ENCODE measurements at regions of chr10 and their contacts with region 1.

Region 1: GRCh38 chr10:74008212-74008731 is 10.4 kb downstream of the VCL start:
- DNase-seq: peak; percentile 98
- ATAC-seq: peak; percentile 80
- H3K4me3 ChIP-seq: peak overlapping the region; percentile 1; the same call in 1 of the 2 replicates
- H3K27ac ChIP-seq: peak overlapping the region; percentile 54
- H3K4me1 ChIP-seq: peaks cover 68% of the 10 kb centered on the region
- H3K27me3 ChIP-seq: no peaks in the 10 kb centered on the region
- CTCF ChIP-seq: 0 out of 2 replicates have a peak, but pooled peaks have one; percentile 17

Region 2: GRCh38 chr10:73730153-73730906 is 277.9 kb before region 1 on chr10:
- CTCF ChIA-PET with region 1: no interaction called
- POLR2A ChIA-PET with region 1: interaction called, 24 read pairs
- intact Hi-C with region 1: no loop called
- DNase-seq: peak; percentile 100
- ATAC-seq: peak; percentile 87
- H3K4me3 ChIP-seq: peak overlapping the region; percentile 69
- H3K27ac ChIP-seq: peak overlapping the region; percentile 72
- H3K4me1 ChIP-seq: peaks cover 9% of the 10 kb centered on the region
- H3K27me3 ChIP-seq: no peaks in the 10 kb centered on the region
- CTCF ChIP-seq: no peak

Region 3: GRCh38 chr10:73965890-73966768 is 42.1 kb before region 1 on chr10:
- CTCF ChIA-PET with region 1: no interaction called
- POLR2A ChIA-PET with region 1: interaction called, 3 read pairs
- intact Hi-C with region 1: loop called (anchors 1 kb)
- DNase-seq: peak; percentile 100
- ATAC-seq: peak; percentile 98
- H3K4me3 ChIP-seq: peak overlapping the region; percentile 6
- H3K27ac ChIP-seq: peak overlapping the region; percentile 73
- H3K4me1 ChIP-seq: peaks cover 27% of the 10 kb centered on the region
- H3K27me3 ChIP-seq: no peaks in the 10 kb centered on the region
- CTCF ChIP-seq: no peak

Region 4: GRCh38 chr10:74021248-74022055 is 13.2 kb after region 1 on chr10:
- CTCF ChIA-PET with region 1: interaction called, 6 read pairs
- POLR2A ChIA-PET with region 1: interaction called, 10 read pairs
- intact Hi-C with region 1: loop called (anchors 1 kb)
- DNase-seq: peak; percentile 89
- ATAC-seq: peak; percentile 53
- H3K4me3 ChIP-seq: no peak overlapping the region
- H3K27ac ChIP-seq: peak overlapping the region; percentile 14
- H3K4me1 ChIP-seq: peaks cover 37% of the 10 kb centered on the region
- H3K27me3 ChIP-seq: no peaks in the 10 kb centered on the region
- CTCF ChIP-seq: no peak

Region 5: DNA sequence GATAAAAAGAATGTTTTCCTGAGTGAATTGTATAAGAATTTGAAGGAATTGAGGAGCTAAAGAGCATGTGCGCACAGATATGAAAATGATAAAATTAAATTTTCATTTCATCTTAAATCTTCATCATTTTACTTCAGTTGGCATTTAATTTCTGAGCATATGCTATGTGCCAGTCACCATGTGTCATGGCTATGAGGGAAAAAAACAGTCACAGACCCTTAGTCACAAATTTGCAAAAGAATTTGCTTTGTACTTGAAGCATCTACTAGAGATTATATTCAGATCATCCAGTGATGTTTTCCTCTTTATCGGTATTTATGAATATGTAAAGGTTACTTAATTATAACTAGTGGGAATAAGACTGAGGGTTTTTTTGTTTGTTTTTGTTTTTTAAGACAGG is 19.4 kb after region 1 on chr10:
- CTCF ChIA-PET with region 1: interaction called, 6 read pairs
- POLR2A ChIA-PET with region 1: interaction called, 10 read pairs
- intact Hi-C with region 1: no loop called
- DNase-seq: peak; percentile 89
- ATAC-seq: no peak
- H3K4me3 ChIP-seq: no peak overlapping the region
- H3K27ac ChIP-seq: peak overlapping the region; percentile 2
- H3K4me1 ChIP-seq: peaks cover 33% of the 10 kb centered on the region
- H3K27me3 ChIP-seq: no peaks in the 10 kb centered on the region
- CTCF ChIP-seq: no peak

Region 6: GRCh38 chr10:74035303-74035702 is 27.0 kb after region 1 on chr10:
- CTCF ChIA-PET with region 1: interaction called, 13 read pairs
- POLR2A ChIA-PET with region 1: no interaction called
- intact Hi-C with region 1: loop called (anchors 1 kb)
- DNase-seq: peak; percentile 76
- ATAC-seq: peak; percentile 51
- H3K4me3 ChIP-seq: no peak overlapping the region
- H3K27ac ChIP-seq: no peak overlapping the region
- H3K4me1 ChIP-seq: no peaks in the 10 kb centered on the region
- H3K27me3 ChIP-seq: no peaks in the 10 kb centered on the region
- CTCF ChIP-seq: peak; percentile 98

Region 7: GRCh38 chr10:74058658-74059057 is 50.4 kb after region 1 on chr10:
- CTCF ChIA-PET with region 1: interaction called, 4 read pairs
- POLR2A ChIA-PET with region 1: no interaction called
- intact Hi-C with region 1: loop called (anchors 1 kb)
- DNase-seq: peak; percentile 77
- ATAC-seq: no peak
- H3K4me3 ChIP-seq: no peak overlapping the region; the same call in 1 of the 2 replicates
- H3K27ac ChIP-seq: peak overlapping the region; percentile 71
- H3K4me1 ChIP-seq: peaks cover 55% of the 10 kb centered on the region
- H3K27me3 ChIP-seq: no peaks in the 10 kb centered on the region
- CTCF ChIP-seq: peak; percentile 75

Measured in PC-3 (cell line).